Activated T-helper 1 cell treated with anti-CD3 and anti-CD28 coated beads, Interleukin-12 subunit alpha, Interleukin-12 subunit beta, Interleukin-2, Interleukin-4 antibody, amounts not matched to agents 30 ng/mL and 10 ng/mL and 1 ng/mL, durations not matched to agents 14 hours and 24 hours and 36 hours (primary cell): ENCODE measurements at regions of chr14 and their contacts with region 1.

Region 1: GRCh38 chr14:61719344-61720293 is 24.3 kb downstream of the HIF1A start:
- DNase-seq: no peak
- H3K4me3 Mint-ChIP-seq: peak overlapping the region; percentile 63
- H3K27ac Mint-ChIP-seq: peak overlapping the region; percentile 74
- H3K4me1 Mint-ChIP-seq: peaks cover 70% of the 10 kb centered on the region
- H3K27me3 Mint-ChIP-seq: no peaks in the 10 kb centered on the region

Region 2: GRCh38 chr14:61703342-61704129 is 16.1 kb before region 1 on chr14:
- intact Hi-C with region 1: loop called (anchors 2 kb)
- DNase-seq: no peak
- H3K4me3 Mint-ChIP-seq: peak overlapping the region; percentile 65
- H3K27ac Mint-ChIP-seq: peak overlapping the region; percentile 75
- H3K4me1 Mint-ChIP-seq: peaks cover 87% of the 10 kb centered on the region
- H3K27me3 Mint-ChIP-seq: no peaks in the 10 kb centered on the region

Region 3: GRCh38 chr14:61730756-61731373 is 11.2 kb after region 1 on chr14:
- intact Hi-C with region 1: loop called (anchors 2 kb)
- DNase-seq: no peak
- H3K4me3 Mint-ChIP-seq: peak overlapping the region; percentile 8
- H3K27ac Mint-ChIP-seq: peak overlapping the region; percentile 61
- H3K4me1 Mint-ChIP-seq: peaks cover 82% of the 10 kb centered on the region
- H3K27me3 Mint-ChIP-seq: no peaks in the 10 kb centered on the region